Naive thymus-derived CD4-positive, alpha-beta T cell (primary cell): ENCODE measurements at regions of chr1 and their contacts with region 1.

Region 1: DNA sequence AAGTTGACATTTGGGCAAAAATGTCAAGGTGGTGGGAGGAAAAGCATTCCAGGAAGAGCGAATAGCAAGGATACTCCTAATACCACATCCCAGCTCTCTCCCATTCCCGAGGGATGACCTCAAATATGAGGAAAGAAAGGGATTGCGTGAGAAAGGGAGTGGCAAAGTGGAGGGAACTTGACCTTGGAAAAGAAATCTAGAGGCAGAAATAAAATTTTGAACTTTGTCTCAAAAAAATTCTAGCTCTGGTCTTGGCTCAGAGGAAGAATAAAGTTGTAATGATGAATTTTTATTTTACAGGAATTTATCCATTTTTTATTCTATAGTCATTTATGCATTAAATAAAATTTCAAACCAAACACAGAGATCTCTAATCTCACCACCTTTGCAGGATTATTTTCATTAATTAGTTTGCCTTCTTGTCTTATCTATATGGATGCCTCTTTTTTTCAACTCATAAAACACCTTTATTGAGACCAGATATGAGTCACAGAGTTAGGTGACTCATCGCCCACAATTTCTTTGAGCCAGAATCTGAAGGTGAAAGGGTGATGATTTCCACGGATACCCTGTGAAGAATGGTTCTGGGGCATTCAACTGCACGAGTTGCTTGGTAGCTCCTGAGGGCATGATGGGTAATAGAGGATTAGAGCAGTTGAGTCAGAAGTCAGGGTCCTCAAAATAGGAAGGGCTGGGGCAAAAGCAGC is 128.0 kb downstream of the TBX19 start:
- DNase-seq: peak in 2 of 9 donors; percentile 21 to 53
- ATAC-seq: peak; percentile 64
- H3K4me3 ChIP-seq: peak overlapping the region; percentile 7
- H3K4me3 Mint-ChIP-seq: peak overlapping the region in 9 of 10 donors; percentile 30 to 80 (median 60)
- H3K27ac ChIP-seq: no peak overlapping the region
- H3K27ac Mint-ChIP-seq: peak overlapping the region; percentile 5 to 85 (median 65)
- H3K4me1 ChIP-seq: peaks cover 11 to 31% of the 10 kb centered on the region in 2 donors
- H3K4me1 Mint-ChIP-seq: peaks cover 17 to 50% (median 34%) of the 10 kb centered on the region in 7 donors
- H3K27me3 ChIP-seq: no peaks in the 10 kb centered on the region
- H3K27me3 Mint-ChIP-seq: no peaks in the 10 kb centered on the region

Region 2: DNA sequence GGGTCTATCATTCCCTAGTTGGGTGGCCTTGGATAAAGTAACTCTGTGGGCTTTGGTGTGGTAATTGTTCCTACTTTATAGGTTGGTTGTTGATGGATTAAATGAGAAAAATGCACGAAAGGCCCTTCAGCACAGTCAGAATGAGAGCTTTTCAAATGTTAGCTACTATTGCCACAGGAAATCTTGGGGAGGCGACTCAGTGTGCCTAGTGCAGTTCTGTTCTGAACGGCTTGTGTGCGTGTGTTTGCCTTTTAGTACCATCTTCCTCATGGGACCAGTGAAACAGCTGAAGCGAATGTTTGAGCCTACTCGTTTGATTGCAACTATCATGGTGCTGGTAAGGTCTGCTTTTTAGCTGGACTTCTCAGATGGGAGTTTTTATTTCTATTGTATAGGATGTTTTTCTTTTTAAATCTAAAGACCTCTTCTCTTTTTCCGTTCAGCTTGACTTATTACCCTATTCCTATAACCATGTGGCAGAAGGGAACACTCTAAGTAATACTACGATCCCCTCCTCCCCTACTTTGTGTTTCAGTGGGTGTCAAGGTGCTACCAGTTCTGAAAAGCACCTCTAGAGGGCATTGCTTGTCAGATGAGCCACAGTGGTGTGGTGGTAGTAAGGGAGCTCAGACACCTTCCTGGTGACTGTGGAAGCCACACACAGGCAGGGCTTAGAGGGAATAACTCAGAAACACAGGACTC is 173.7 kb before region 1 on chr1:
- CTCF ChIA-PET with region 1: no interaction called
- POLR2A ChIA-PET with region 1: no interaction called
- intact Hi-C with region 1: loop called in 1 of 2 experiments (anchors 5 kb)
- DNase-seq: peak in 7 of 9 donors; percentile 17 to 38 (median 27)
- ATAC-seq: peak; percentile 95
- H3K4me3 ChIP-seq: no peak overlapping the region
- H3K4me3 Mint-ChIP-seq: peak overlapping the region in 1 of 10 donors; percentile 26
- H3K27ac ChIP-seq: no peak overlapping the region
- H3K27ac Mint-ChIP-seq: peak overlapping the region in 4 of 9 donors; percentile 1 to 68 (median 34)
- H3K4me1 ChIP-seq: peaks cover 9 to 11% of the 10 kb centered on the region in 2 donors
- H3K4me1 Mint-ChIP-seq: peaks cover 33 to 71% (median 61%) of the 10 kb centered on the region in 7 donors
- H3K27me3 ChIP-seq: no peaks in the 10 kb centered on the region
- H3K27me3 Mint-ChIP-seq: no peaks in the 10 kb centered on the region

Region 3: DNA sequence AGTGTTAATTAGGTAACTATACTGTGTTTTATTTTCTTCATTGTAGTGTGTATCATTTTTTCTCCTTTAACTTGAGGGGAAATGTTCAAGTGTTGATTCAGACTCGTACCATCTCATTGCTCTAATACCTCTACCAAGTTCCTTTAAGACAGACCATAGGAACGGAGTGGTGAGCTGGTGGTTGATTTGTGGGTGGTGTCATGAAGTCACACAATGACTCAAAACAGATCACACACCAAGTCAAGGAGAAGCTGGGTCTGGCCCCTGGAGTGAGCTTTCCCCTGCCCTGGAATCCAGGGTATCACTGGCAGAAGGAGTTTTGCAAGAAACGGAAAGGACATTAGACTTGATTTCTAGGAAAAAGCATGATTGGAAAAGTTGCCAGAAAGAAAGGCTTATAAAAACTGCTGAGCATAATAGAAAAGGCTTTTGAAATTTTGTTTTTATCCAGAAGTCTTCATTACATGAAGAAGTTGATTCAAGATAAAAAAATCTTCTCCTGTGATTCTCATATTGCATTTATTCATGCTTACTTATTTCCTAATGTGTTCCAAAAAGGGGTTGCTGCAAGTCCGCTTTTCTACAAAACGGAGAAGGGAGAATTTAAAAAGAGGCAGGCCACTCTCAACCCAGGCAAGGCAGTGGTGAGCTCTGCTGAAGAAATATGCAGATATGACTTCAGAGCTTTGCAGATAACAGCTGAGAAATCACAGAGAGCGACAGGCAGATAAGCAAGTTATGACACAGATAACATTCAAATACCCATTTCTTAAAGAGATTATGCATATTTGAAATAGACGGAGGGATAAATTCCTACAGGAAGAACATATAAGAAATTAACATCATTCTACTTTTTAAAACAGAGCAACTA is 48.3 kb before region 1 on chr1:
- CTCF ChIA-PET with region 1: no interaction called
- POLR2A ChIA-PET with region 1: no interaction called
- intact Hi-C with region 1: loop called in 1 of 2 experiments (anchors 5 kb)
- DNase-seq: peak in 1 of 9 donors; percentile 51
- ATAC-seq: no peak
- H3K4me3 ChIP-seq: no peak overlapping the region
- H3K4me3 Mint-ChIP-seq: peak overlapping the region in 1 of 10 donors; percentile 49
- H3K27ac ChIP-seq: no peak overlapping the region
- H3K27ac Mint-ChIP-seq: peak overlapping the region in 2 of 9 donors; percentile 35 to 70
- H3K4me1 ChIP-seq: peaks cover 4 to 37% of the 10 kb centered on the region in 2 donors
- H3K4me1 Mint-ChIP-seq: peaks cover 8 to 45% (median 10%) of the 10 kb centered on the region in 7 donors
- H3K27me3 ChIP-seq: no peaks in the 10 kb centered on the region
- H3K27me3 Mint-ChIP-seq: peaks cover 0 to 12% (median 5%) of the 10 kb centered on the region in 5 donors

Region 4: GRCh38 chr1:168421399-168422004 is 12.8 kb after region 1 on chr1:
- CTCF ChIA-PET with region 1: no interaction called
- POLR2A ChIA-PET with region 1: no interaction called
- intact Hi-C with region 1: loop called in 1 of 2 experiments (anchors 1 kb)
- DNase-seq: no peak
- ATAC-seq: peak; percentile 81
- H3K4me3 ChIP-seq: no peak overlapping the region
- H3K4me3 Mint-ChIP-seq: peak overlapping the region in 2 of 10 donors; percentile 48 to 54
- H3K27ac ChIP-seq: no peak overlapping the region
- H3K27ac Mint-ChIP-seq: peak overlapping the region in 5 of 9 donors; percentile 14 to 75 (median 23)
- H3K4me1 ChIP-seq: peaks cover 0 to 38% of the 10 kb centered on the region in 2 donors
- H3K4me1 Mint-ChIP-seq: peaks cover 5 to 24% (median 7%) of the 10 kb centered on the region in 7 donors
- H3K27me3 ChIP-seq: no peaks in the 10 kb centered on the region
- H3K27me3 Mint-ChIP-seq: no peaks in the 10 kb centered on the region